Activated CD4-positive, alpha-beta memory T cell treated with anti-CD3 and anti-CD28 coated beads, Interleukin-2, amount 10 ng/mL, durations not matched to agents 7 days and 5 days (primary cell): ENCODE measurements at regions of chr12 and their contacts with region 1.

Region 1: DNA sequence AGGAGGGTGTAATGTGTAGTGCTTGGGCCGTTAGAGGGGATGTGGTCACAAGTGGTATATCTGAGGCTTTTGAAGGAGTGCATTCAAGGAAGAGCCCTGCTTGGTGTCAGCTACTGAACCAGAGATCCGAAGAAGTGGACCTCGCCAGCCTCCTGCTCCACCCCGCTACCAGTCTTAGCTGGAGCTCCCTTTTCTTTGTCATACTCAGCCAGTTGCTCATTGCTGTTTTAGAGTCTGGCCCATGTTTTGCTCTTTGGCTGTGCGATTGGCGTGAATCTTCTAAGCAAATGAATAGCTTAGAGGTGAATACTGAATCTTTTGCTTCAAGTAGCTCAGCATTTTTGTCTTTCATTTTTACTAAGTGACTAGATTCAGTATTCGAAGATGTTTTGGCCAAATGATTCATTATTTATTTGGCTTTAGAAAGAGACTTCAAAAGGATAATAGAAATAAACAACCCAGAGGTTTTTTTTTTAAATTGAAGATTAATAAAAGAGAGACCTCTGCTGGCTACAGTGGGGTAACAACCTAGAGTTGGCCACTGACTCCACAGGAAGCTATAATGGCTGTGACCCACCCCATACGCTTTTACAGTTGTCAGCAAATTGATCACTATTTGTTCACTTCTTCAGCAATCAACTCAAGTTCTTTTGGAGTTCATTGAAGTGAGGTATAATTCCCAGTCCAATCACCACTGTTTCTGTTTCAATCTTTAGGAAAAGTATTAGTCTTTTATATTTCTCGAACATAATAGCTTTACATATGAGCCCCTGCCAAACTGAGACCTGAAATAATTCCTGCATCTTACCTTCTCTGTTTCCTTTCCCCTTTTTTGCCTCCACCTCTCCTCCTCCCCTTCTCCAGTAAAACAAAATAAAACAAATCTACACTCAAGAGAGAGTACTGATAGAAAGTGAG is 19.9 kb downstream of the CDKN1B start:
- DNase-seq: peak; percentile 77
- H3K4me3 Mint-ChIP-seq: peak overlapping the region; percentile 68
- H3K27ac Mint-ChIP-seq: peak overlapping the region; percentile 94
- H3K4me1 Mint-ChIP-seq: peaks cover 67% of the 10 kb centered on the region
- H3K27me3 Mint-ChIP-seq: no peaks in the 10 kb centered on the region

Region 2: DNA sequence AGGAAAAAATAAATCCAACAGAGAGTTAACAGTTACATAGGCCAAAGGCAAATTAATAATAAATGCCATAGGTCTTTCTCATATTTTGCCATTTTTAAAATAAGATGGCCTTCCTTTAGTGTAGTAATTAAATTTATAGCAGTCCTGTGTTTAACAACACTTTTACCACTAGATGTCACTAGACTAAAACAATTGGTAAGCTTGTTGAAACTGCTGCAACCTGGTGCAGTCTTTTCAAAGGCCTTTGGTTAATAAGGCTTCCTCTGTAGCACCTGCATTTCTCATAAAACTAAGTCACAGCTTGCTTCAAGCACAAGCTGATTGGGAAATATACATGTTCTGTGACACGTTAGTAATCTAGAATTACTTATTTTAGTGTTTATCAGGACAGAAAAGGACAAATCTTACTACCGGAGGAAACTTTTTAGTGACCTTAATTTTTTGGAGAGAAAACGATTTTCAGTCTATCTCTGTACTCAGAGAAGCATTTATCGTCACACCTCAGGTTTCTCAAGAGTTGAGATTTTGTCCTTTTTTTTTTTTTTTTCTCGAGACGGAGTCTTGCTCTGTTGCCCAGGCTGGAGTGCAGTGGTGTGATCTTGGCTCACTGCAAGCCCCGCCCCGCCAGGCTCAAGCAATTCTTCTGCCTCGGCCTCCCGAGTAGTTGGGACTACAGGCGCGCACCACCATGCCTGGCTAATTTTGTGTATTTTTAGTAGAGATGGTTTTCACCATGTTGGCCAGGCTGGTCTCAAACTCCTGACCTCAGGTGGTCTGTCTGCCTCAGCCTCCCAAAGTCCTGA is 360.2 kb before region 1 on chr12:
- CTCF ChIA-PET with region 1: interaction called, 49 read pairs
- POLR2A ChIA-PET with region 1: interaction called, 26 read pairs
- DNase-seq: no peak
- H3K4me3 Mint-ChIP-seq: no peak overlapping the region
- H3K27ac Mint-ChIP-seq: peak overlapping the region; percentile 65
- H3K4me1 Mint-ChIP-seq: peaks cover 60% of the 10 kb centered on the region
- H3K27me3 Mint-ChIP-seq: no peaks in the 10 kb centered on the region

Region 3: GRCh38 chr12:12474931-12475795 is 261.9 kb before region 1 on chr12:
- CTCF ChIA-PET with region 1: interaction called, 23 read pairs
- POLR2A ChIA-PET with region 1: interaction called, 33 read pairs
- DNase-seq: peak; percentile 74
- H3K4me3 Mint-ChIP-seq: peak overlapping the region; percentile 67
- H3K27ac Mint-ChIP-seq: peak overlapping the region; percentile 100
- H3K4me1 Mint-ChIP-seq: peaks cover 86% of the 10 kb centered on the region
- H3K27me3 Mint-ChIP-seq: no peaks in the 10 kb centered on the region

Region 4: DNA sequence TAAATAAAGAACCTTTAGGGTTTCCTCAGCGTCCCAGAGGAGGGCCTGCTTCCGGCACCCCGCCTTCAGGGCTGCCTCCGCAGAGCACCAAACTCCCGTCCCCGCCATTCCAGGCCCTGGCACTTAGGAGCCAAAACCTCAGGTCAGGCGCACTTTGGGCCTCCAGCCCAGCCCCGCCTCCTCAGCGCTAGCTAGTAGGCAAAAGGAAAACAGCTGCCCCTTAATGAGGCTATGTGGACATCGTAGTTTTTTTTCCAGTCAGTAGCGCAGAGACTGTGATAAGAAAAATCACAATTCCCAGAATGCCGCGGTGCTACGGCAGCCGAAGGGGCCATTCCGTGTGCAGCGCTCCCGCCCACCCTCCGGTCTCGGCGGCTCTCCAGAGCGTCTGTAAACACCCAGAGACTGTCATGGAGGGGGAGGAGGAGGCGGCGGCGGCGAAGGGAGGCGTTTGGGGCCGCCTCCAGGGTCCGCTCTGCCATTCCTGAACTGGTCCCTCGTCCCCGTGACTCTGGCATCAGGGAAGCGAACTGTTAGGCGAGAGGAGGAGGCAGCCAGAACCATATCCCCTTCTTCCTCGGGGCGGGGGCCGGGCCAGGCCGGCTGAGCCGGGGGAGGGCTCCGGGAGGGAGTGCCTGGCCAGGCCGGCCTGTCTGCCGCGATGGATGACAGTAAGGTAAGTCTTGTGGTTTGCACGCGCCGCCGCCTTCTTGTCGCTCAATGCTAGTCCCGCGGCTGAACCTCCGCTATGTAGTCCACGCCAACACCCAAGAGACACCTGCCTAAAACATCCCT is 125.3 kb before region 1 on chr12 and contains the start of gene CREBL2:
- CTCF ChIA-PET with region 1: interaction called, 4 read pairs
- POLR2A ChIA-PET with region 1: interaction called, 18 read pairs
- DNase-seq: peak; percentile 86
- H3K4me3 Mint-ChIP-seq: peak within 1 kb of the TSS; percentile 89
- H3K27ac Mint-ChIP-seq: peak within 1 kb of the TSS; percentile 95
- H3K4me1 Mint-ChIP-seq: peaks cover 64% of the 10 kb centered on the region
- H3K27me3 Mint-ChIP-seq: no peaks in the 10 kb centered on the region
- total RNA-seq, gene CREBL2: 24.2 to 26.1 TPM

Region 5: DNA sequence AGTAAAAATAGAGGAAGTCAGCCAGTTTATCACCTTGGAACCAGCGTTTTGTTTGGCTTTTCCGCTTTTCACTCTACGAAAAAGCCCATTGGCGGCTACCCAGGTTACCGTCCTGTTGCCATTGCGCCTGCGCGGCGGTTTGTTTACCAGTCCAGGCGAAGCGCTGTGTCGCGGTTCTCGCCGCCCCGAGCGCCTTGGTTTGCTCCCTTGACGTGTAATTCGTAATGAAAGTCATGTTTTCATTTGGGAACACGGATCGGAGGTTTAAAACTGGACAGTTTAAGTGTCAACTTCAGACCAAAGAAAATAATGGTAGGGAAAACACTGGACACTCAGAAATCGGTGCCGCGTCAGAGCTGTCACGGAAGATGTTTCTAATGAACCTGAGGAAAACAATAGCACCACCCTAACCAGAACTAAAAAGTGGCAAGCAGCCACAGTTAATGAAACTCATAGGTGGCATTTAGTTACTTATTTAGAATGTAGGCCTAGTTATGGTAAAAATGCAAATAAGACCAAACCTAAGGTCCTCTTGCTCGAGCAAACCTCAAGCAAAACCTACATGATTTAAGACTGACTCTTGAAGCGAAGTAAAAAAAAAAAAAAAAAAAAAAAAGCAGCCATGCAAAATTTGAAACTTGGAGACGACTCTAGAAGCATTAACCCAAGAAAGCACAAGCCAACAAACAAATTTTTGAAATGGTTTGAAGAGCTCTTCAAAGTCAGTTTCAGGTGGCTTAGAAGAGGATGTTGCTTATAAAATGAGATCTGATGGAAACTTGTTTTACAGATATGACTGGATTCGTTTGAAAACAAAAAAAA is 40.2 kb before region 1 on chr12:
- CTCF ChIA-PET with region 1: interaction called, 18 read pairs
- POLR2A ChIA-PET with region 1: interaction called, 83 read pairs
- DNase-seq: peak; percentile 93
- H3K4me3 Mint-ChIP-seq: peak overlapping the region; percentile 83
- H3K27ac Mint-ChIP-seq: peak overlapping the region; percentile 100
- H3K4me1 Mint-ChIP-seq: peaks cover 63% of the 10 kb centered on the region
- H3K27me3 Mint-ChIP-seq: no peaks in the 10 kb centered on the region

Region 6: GRCh38 chr12:12724661-12725545 is 12.1 kb before region 1 on chr12:
- CTCF ChIA-PET with region 1: interaction called, 63 read pairs
- POLR2A ChIA-PET with region 1: interaction called, 845 read pairs
- DNase-seq: peak; percentile 92
- H3K4me3 Mint-ChIP-seq: peak overlapping the region; percentile 94
- H3K27ac Mint-ChIP-seq: peak overlapping the region; percentile 96
- H3K4me1 Mint-ChIP-seq: peaks cover 33% of the 10 kb centered on the region
- H3K27me3 Mint-ChIP-seq: no peaks in the 10 kb centered on the region

Region 7: DNA sequence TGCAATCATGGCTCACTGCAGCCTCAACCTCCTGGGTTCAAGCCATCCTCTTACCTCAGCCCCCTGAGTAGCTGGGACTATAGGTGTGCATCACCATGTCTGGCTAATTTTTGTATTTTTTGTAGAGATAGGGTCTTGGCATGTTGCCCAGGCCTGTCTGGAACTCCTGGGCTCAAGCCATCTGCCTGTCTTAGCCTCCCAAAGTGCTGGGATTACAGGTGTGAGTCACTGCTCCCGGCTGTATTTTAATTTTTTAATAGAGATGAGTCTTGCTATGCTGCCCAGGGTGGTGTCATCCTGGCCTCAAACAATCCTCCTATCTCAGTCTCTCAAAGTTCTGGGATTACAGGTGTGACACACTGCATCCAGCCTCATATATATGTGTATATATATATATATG is 122.7 kb after region 1 on chr12:
- CTCF ChIA-PET with region 1: no interaction called
- POLR2A ChIA-PET with region 1: no interaction called
- DNase-seq: no peak
- H3K4me3 Mint-ChIP-seq: no peak overlapping the region
- H3K27ac Mint-ChIP-seq: no peak overlapping the region
- H3K4me1 Mint-ChIP-seq: no peaks in the 10 kb centered on the region
- H3K27me3 Mint-ChIP-seq: no peaks in the 10 kb centered on the region

Region 8: GRCh38 chr12:13004361-13004760 is 267.3 kb after region 1 on chr12:
- CTCF ChIA-PET with region 1: no interaction called
- POLR2A ChIA-PET with region 1: no interaction called
- DNase-seq: no peak
- H3K4me3 Mint-ChIP-seq: no peak overlapping the region
- H3K27ac Mint-ChIP-seq: no peak overlapping the region
- H3K4me1 Mint-ChIP-seq: peaks cover 12% of the 10 kb centered on the region
- H3K27me3 Mint-ChIP-seq: peaks cover 35% of the 10 kb centered on the region